ENCODE measurements at regions of chr7 and their contacts with region 1.

Region 1: GRCh38 chr7:87797798-87798403 is 78.3 kb downstream of the SLC25A40 start:
- DNase-seq: peak; percentile 73
- H3K4me3 ChIP-seq: no peak overlapping the region
- H3K27ac ChIP-seq: no peak overlapping the region
- H3K4me1 ChIP-seq: no peaks in the 10 kb centered on the region
- H3K27me3 ChIP-seq: no peaks in the 10 kb centered on the region
- CTCF ChIP-seq: peak; percentile 44 to 56
- POLR2A ChIP-seq: no peak

Region 2: DNA sequence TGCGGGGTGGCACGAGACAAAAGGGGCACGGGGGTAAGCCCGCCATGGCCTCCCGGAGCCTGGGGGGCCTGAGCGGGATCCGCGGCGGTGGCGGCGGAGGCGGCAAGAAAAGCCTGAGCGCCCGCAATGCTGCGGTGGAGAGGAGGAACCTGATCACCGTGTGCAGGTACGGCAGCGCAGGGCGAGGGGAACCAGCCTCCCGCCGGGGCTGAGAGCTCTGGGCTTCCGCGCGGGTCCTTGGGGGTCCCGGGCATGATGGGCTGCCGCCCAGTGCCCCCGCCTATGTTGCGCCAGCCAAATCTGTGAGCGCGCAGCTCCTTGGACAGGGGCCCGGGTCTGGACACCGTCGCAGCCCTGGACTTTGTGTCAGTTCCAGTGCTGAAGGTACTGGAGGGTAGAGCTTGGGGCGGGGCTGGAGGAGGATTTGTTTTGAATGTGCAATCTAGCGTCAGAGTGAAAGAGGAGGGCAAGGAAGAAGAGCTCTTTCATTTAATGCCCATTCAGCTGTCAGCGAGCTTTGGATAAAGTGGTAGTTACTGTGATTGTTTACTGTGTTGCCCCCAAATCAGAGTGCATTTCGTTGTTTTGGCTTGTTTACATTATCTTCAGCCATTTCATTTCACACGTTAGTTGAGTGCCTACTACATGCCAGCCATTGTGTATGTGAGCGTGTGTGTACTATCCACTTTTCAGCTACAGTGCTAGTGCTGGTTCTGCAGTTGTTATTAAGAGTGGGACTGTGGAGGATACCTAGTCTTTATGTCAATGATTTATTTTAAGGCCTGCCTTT is 168.9 kb before region 1 on chr7:
- CTCF ChIA-PET with region 1: interaction called, 3 read pairs
- POLR2A ChIA-PET with region 1: no interaction called
- dilution Hi-C with region 1: no loop called
- intact Hi-C with region 1: loop called (anchors 10 kb)
- DNase-seq: peak; percentile 13
- H3K4me3 ChIP-seq: peak overlapping the region; percentile 44 to 53 (median 49)
- H3K27ac ChIP-seq: no peak overlapping the region
- H3K4me1 ChIP-seq: peaks cover 4% of the 10 kb centered on the region
- H3K27me3 ChIP-seq: peaks cover 0 to 2% of the 10 kb centered on the region in 2 experiments
- CTCF ChIP-seq: no peak
- POLR2A ChIP-seq: no peak

Region 3: GRCh38 chr7:87886875-87887274 is 89.0 kb after region 1 on chr7:
- CTCF ChIA-PET with region 1: interaction called, 39 read pairs
- POLR2A ChIA-PET with region 1: no interaction called
- dilution Hi-C with region 1: no loop called
- intact Hi-C with region 1: loop called (anchors 1 kb)
- DNase-seq: peak; percentile 56
- H3K4me3 ChIP-seq: no peak overlapping the region
- H3K27ac ChIP-seq: no peak overlapping the region
- H3K4me1 ChIP-seq: no peaks in the 10 kb centered on the region
- H3K27me3 ChIP-seq: no peaks in the 10 kb centered on the region
- CTCF ChIP-seq: peak; percentile 3 to 9
- POLR2A ChIP-seq: no peak

Region 4: DNA sequence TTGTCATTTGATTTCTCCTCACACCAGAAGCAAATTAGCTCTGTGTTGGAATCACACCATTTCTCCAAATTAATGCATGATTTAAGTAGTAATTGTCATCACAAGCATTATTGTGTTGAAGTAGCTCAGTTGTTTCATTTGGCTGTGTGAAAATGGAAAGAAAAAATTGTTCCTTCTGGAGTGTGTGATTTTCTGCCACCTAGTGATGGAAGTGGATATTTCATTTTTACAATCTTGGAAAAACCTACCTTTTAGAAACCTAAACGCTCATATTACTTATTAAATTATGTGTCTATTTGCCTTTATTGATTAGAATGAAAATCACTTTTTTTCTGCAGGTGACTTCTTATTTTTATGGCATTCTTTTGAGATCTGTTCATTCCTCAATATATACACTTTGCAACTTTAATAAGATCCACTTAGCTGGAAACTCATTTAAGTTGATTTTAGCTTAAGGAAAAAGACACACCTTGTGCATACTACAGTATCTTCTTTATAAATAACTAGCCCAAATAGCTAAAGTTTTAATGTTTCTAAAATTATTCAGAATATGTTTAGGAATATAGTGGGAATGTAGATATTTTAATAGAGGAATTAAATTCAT is 371.9 kb after region 1 on chr7:
- CTCF ChIA-PET with region 1: interaction called, 11 read pairs
- POLR2A ChIA-PET with region 1: no interaction called
- dilution Hi-C with region 1: no loop called
- intact Hi-C with region 1: loop called (anchors 2 kb)
- DNase-seq: peak; percentile 40
- H3K4me3 ChIP-seq: no peak overlapping the region
- H3K27ac ChIP-seq: no peak overlapping the region
- H3K4me1 ChIP-seq: no peaks in the 10 kb centered on the region
- H3K27me3 ChIP-seq: no peaks in the 10 kb centered on the region
- CTCF ChIP-seq: peak; percentile 17 to 33
- POLR2A ChIP-seq: no peak